PC-9 (cell line): ENCODE measurements at regions of chr10 and their contacts with region 1.

Region 1: DNA sequence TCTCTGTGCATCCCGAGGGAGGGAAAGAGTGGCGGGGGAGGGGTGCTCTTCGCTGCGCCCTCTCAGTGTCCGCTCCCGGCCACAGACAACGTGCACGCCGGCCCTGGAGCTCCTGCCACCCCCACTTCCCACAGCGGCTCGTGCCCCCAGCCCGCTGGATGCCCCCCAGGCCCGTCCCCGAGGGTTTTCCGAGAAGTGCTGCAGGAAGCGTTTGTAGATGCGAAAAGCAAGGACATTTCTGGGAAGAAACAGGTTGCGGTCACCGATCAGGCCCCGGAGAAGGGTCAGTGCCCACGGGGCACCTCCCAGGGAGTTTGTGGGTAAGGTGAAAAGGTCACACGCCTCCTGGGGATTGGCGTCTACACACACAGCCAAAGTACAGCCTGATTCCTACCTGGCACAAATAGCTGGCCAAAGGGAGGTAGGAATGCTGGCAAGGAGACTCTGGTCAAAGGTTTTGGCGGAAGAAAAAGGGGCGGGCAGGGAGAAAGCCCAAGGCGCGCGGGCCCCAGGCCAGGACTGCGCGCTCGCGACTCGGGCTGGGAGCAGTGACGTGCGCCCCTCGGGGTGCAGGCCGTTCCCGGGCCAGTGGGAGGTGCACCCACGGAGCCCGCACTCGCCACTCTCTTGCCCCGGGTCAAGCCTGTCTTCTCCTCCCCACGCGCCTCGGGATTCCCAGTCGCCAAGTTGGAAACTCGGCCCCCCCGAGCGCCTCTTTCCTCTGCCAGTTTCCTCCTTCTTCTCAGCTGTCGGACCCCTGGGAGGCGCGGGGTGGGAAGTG is 1.5 kb upstream of the NRP1 start:
- DNase-seq: peak; percentile 72
- H3K4me3 ChIP-seq: peak overlapping the region; percentile 92
- H3K27ac ChIP-seq: peak overlapping the region; percentile 79
- H3K4me1 ChIP-seq: peaks cover 16% of the 10 kb centered on the region; the same call in 1 of the 2 replicates
- H3K27me3 ChIP-seq: no peaks in the 10 kb centered on the region
- CTCF ChIP-seq: no peak

Region 2: GRCh38 chr10:35165136-35165535 is 1829.1 kb after region 1 on chr10:
- CTCF ChIA-PET with region 1: no interaction called
- POLR2A ChIA-PET with region 1: interaction called, 10 read pairs
- intact Hi-C with region 1: no loop called
- DNase-seq: no peak
- H3K4me3 ChIP-seq: no peak overlapping the region
- H3K27ac ChIP-seq: no peak overlapping the region
- H3K4me1 ChIP-seq: no peaks in the 10 kb centered on the region
- H3K27me3 ChIP-seq: no peaks in the 10 kb centered on the region
- CTCF ChIP-seq: no peak